ENCODE measurements at regions of chr3 and their contacts with region 1.

Region 1: DNA sequence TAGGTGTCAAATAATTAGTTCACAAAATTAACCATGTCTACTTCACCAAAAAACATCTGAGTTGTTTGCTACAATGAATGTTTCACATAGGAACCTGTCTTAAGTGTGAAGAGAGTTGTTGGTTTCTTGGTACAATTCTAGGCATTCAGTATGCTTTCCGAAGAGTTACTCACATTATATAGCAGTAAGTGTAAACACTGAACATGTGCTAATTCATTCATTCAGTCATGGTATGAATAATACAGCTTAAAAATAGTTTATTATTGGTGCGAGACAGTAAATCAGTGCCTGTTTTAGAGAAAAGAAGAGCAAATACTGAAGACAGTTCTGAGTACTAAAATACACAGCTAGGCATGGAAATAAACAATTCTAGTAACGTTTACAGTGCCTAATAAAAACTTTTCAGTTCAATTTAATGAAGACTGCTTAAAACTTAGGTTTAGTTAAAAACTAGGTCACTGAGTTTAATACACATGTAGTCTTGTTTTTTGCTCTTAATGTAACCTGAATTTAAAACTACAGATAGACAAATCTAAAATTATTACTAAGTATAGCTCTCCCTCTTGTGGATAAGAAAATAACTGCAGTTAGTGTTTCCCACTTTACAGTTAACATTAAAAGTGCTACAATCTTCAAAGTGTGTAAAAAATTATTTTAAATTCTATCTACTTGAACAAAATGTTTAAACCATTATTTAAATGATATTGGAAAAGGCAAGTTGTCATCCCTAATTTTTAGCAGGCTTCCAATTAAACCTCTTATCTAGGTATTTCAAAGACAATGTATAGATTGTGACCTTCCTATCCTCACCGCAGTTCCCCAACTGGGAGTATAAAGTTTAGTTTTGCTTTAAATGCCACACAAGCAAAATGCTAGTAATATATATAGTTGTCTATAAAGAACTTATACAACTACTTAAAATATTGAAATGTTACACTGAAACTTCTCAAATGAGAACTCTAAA is 20.1 kb upstream of the ZCWPW2 start:
- DNase-seq: peak in 2 of 3 donors; percentile 14 to 54
- H3K4me3 ChIP-seq: no peak overlapping the region
- H3K4me3 Mint-ChIP-seq: no peak overlapping the region
- H3K27ac ChIP-seq: no peak overlapping the region
- H3K27ac Mint-ChIP-seq: no peak overlapping the region
- H3K4me1 ChIP-seq: peaks cover 4 to 10% of the 10 kb centered on the region in 2 donors
- H3K4me1 Mint-ChIP-seq: peaks cover 6% of the 10 kb centered on the region
- H3K27me3 ChIP-seq: no peaks in the 10 kb centered on the region
- H3K27me3 Mint-ChIP-seq: no peaks in the 10 kb centered on the region
- CTCF ChIP-seq: peak; percentile 86

Region 2: GRCh38 chr3:27712136-27713077 is 616.1 kb before region 1 on chr3:
- intact Hi-C with region 1: loop called (anchors 5 to 10 kb)
- DNase-seq: peak; percentile 49 to 65 (median 55)
- H3K4me3 ChIP-seq: peak overlapping the region; percentile 52 to 87 (median 57)
- H3K4me3 Mint-ChIP-seq: peak overlapping the region; percentile 97 to 100
- H3K27ac ChIP-seq: no peak overlapping the region
- H3K27ac Mint-ChIP-seq: peak overlapping the region in 3 of 7 donors; percentile 46 to 77 (median 59)
- H3K4me1 ChIP-seq: peaks cover 31 to 34% of the 10 kb centered on the region in 2 donors
- H3K4me1 Mint-ChIP-seq: peaks cover 37% of the 10 kb centered on the region
- H3K27me3 ChIP-seq: peaks cover 65 to 84% of the 10 kb centered on the region in 2 donors
- H3K27me3 Mint-ChIP-seq: peaks cover 71 to 83% (median 77%) of the 10 kb centered on the region in 3 donors
- CTCF ChIP-seq: peak; percentile 84

Region 3: GRCh38 chr3:28348629-28349483 is 20.4 kb after region 1 on chr3 and contains the starts of genes AZI2 and ZCWPW2:
- intact Hi-C with region 1: loop called in 1 of 2 experiments (anchors 2 kb)
- DNase-seq: peak; percentile 88 to 93 (median 92)
- H3K4me3 ChIP-seq: peak within 1 kb of the TSS; percentile 86 to 99 (median 94)
- H3K4me3 Mint-ChIP-seq: peak within 1 kb of the TSS; percentile 89 to 94
- H3K27ac ChIP-seq: peak within 1 kb of the TSS; percentile 100
- H3K27ac Mint-ChIP-seq: peak within 1 kb of the TSS; percentile 98 to 100 (median 100)
- H3K4me1 ChIP-seq: peaks cover 29 to 51% of the 10 kb centered on the region in 2 donors
- H3K4me1 Mint-ChIP-seq: peaks cover 36% of the 10 kb centered on the region
- H3K27me3 ChIP-seq: no peaks in the 10 kb centered on the region
- H3K27me3 Mint-ChIP-seq: peaks cover 0 to 2% (median 1%) of the 10 kb centered on the region in 3 donors
- CTCF ChIP-seq: no peak
- polyA plus RNA-seq, gene AZI2: 57.4 to 134 (median 99.3) TPM
- polyA plus RNA-seq, gene ZCWPW2: 0.07 to 0.41 (median 0.35) TPM